CD8-positive, alpha-beta T cell (primary cell): ENCODE measurements at regions of chr10 and their contacts with region 1.

Region 1: DNA sequence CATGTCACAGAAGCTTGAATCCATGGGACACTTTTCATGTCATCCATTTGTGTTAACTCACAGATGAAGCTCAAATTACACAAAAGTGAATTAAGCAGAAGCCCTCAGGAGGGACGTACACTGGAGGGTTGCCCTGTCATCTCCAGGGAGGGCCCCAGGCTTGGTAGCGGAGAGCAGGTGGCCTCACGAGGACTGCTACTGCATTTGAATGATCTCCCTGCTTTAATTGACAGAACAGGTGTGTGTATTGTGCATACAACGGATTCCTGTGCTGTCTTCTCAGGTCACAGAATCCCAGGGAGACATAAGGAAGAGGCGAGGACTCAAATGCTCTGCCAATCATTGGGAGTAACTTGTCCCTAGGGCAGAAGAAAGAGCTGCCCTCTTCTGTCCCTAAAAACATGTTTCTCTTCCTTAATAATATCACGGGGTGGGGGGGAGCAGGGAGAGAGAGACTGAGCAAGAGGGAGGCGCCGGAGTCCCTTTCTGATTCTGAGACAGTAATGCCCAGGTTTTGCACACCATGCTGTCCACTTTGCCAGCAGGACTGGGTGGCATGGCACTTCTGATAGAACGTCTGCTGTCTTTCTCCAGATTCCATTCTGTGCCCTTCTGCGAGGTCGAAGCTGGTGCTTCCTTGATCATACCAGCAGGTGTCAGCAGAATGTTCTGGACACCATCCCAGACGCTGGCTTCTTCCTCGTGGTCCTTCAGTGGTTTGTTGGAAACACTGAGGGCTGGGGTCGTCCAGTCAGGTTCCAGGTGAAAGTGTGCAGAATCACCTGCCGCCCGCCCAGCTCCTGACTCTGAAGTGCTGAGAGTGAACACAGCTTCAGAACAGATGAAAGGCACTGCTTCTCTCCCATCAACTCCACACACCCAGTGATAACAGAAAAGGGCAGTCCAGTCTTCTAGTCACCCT is 26.2 kb upstream of the RASGEF1A start:
- DNase-seq: peak in 7 of 9 experiments; percentile 35 to 72 (median 58)
- ATAC-seq: peak; percentile 53
- H3K4me3 ChIP-seq: no peak overlapping the region
- H3K4me3 Mint-ChIP-seq: peak overlapping the region; percentile 49
- H3K27ac ChIP-seq: no peak overlapping the region
- H3K27ac Mint-ChIP-seq: peak overlapping the region; percentile 71
- H3K4me1 ChIP-seq: peaks cover 32% of the 10 kb centered on the region
- H3K4me1 Mint-ChIP-seq: peaks cover 52% of the 10 kb centered on the region
- H3K27me3 ChIP-seq: peaks cover 0 to 3% of the 10 kb centered on the region in 2 experiments
- H3K27me3 Mint-ChIP-seq: no peaks in the 10 kb centered on the region
- CTCF ChIP-seq: peak; percentile 63

Region 2: GRCh38 chr10:43204943-43205671 is 87.9 kb before region 1 on chr10:
- CTCF ChIA-PET with region 1: interaction called, 11 read pairs
- POLR2A ChIA-PET with region 1: no interaction called
- intact Hi-C with region 1: no loop called
- DNase-seq: peak in 8 of 9 experiments; percentile 33 to 77 (median 58)
- ATAC-seq: peak; percentile 55
- H3K4me3 ChIP-seq: no peak overlapping the region
- H3K4me3 Mint-ChIP-seq: no peak overlapping the region
- H3K27ac ChIP-seq: peak overlapping the region in 1 of 2 experiments; percentile 30
- H3K27ac Mint-ChIP-seq: no peak overlapping the region
- H3K4me1 ChIP-seq: peaks cover 3% of the 10 kb centered on the region
- H3K4me1 Mint-ChIP-seq: peaks cover 6% of the 10 kb centered on the region
- H3K27me3 ChIP-seq: no peaks in the 10 kb centered on the region
- H3K27me3 Mint-ChIP-seq: no peaks in the 10 kb centered on the region
- CTCF ChIP-seq: peak; percentile 70

Region 3: DNA sequence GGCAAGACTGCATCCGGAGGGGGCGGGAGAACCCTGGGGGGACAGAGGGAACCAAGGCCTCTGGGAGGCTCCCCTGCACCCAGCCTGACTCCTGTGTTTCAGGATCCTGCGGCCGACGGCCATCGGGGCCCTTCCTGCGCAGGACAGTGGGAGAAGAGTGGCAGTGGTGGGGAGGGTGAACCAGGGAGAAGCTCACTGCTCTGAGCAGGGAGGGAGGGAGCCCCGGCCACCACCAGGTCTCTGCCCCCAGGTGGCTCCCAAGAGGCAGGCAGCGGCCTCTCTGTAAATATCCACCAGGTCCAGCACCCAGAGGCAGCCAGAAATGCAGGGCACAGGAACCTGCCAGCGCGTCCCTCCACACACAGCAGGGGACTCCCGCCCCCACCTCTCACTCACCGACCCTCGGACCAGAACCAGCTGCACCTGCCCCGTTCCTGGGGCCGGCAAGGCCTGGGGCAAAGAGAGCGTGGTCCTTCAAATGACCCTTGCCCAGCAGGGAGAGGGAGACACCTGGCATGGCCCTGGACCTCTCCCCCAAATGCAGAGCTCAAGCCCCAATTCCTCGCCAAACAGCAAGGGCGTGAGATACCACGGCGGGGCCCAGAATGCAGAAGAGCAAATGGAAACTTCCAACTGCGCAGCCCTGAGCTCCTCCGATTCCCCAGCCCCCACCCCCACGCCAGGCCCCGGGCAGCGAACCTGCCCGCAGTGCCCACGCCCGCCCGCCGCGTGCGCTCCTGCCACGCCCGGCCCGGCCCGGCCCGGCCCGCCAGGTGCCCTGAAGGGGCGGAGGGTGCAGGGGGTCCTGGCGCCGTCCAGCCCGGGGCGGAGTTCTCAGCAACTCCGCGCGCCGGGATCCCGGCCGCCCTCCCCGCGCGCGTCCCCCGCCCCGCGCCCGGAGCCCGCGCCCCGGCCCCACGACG is 27.0 kb before region 1 on chr10:
- CTCF ChIA-PET with region 1: interaction called, 9 read pairs
- POLR2A ChIA-PET with region 1: interaction called, 3 read pairs
- intact Hi-C with region 1: loop called in 1 of 2 experiments (anchors 2 kb)
- DNase-seq: peak in 8 of 9 experiments; percentile 27 to 71 (median 49)
- ATAC-seq: peak; percentile 78
- H3K4me3 ChIP-seq: peak overlapping the region; percentile 41
- H3K4me3 Mint-ChIP-seq: peak overlapping the region; percentile 81
- H3K27ac ChIP-seq: no peak overlapping the region
- H3K27ac Mint-ChIP-seq: no peak overlapping the region
- H3K4me1 ChIP-seq: peaks cover 6% of the 10 kb centered on the region
- H3K4me1 Mint-ChIP-seq: peaks cover 6% of the 10 kb centered on the region
- H3K27me3 ChIP-seq: peaks cover 14 to 25% of the 10 kb centered on the region in 2 experiments
- H3K27me3 Mint-ChIP-seq: peaks cover 50% of the 10 kb centered on the region
- CTCF ChIP-seq: no peak

Region 4: GRCh38 chr10:43304687-43305340 is 11.8 kb after region 1 on chr10:
- CTCF ChIA-PET with region 1: interaction called, 14 read pairs
- POLR2A ChIA-PET with region 1: interaction called, 4 read pairs
- intact Hi-C with region 1: loop called in 1 of 2 experiments (anchors 2 kb)
- DNase-seq: peak in 8 of 9 experiments; percentile 33 to 72 (median 61)
- ATAC-seq: peak; percentile 69
- H3K4me3 ChIP-seq: peak overlapping the region; percentile 40
- H3K4me3 Mint-ChIP-seq: peak overlapping the region; percentile 79
- H3K27ac ChIP-seq: no peak overlapping the region
- H3K27ac Mint-ChIP-seq: no peak overlapping the region
- H3K4me1 ChIP-seq: peaks cover 32% of the 10 kb centered on the region
- H3K4me1 Mint-ChIP-seq: peaks cover 51% of the 10 kb centered on the region
- H3K27me3 ChIP-seq: no peaks in the 10 kb centered on the region
- H3K27me3 Mint-ChIP-seq: no peaks in the 10 kb centered on the region
- CTCF ChIP-seq: no peak

Region 5: GRCh38 chr10:43327171-43327570 is 34.2 kb after region 1 on chr10:
- CTCF ChIA-PET with region 1: interaction called, 14 read pairs
- POLR2A ChIA-PET with region 1: no interaction called
- intact Hi-C with region 1: no loop called
- DNase-seq: no peak
- ATAC-seq: no peak
- H3K4me3 ChIP-seq: no peak overlapping the region
- H3K4me3 Mint-ChIP-seq: no peak overlapping the region
- H3K27ac ChIP-seq: no peak overlapping the region
- H3K27ac Mint-ChIP-seq: no peak overlapping the region
- H3K4me1 ChIP-seq: peaks cover 17% of the 10 kb centered on the region
- H3K4me1 Mint-ChIP-seq: peaks cover 16% of the 10 kb centered on the region
- H3K27me3 ChIP-seq: peaks cover 0 to 2% of the 10 kb centered on the region in 2 experiments
- H3K27me3 Mint-ChIP-seq: peaks cover 4% of the 10 kb centered on the region
- CTCF ChIP-seq: no peak